Activated B cell treated with CpG ODN at 0.5 μM for 24 hours (primary cell): ENCODE measurements at regions of chr11 and their contacts with region 1.

Region 1: DNA sequence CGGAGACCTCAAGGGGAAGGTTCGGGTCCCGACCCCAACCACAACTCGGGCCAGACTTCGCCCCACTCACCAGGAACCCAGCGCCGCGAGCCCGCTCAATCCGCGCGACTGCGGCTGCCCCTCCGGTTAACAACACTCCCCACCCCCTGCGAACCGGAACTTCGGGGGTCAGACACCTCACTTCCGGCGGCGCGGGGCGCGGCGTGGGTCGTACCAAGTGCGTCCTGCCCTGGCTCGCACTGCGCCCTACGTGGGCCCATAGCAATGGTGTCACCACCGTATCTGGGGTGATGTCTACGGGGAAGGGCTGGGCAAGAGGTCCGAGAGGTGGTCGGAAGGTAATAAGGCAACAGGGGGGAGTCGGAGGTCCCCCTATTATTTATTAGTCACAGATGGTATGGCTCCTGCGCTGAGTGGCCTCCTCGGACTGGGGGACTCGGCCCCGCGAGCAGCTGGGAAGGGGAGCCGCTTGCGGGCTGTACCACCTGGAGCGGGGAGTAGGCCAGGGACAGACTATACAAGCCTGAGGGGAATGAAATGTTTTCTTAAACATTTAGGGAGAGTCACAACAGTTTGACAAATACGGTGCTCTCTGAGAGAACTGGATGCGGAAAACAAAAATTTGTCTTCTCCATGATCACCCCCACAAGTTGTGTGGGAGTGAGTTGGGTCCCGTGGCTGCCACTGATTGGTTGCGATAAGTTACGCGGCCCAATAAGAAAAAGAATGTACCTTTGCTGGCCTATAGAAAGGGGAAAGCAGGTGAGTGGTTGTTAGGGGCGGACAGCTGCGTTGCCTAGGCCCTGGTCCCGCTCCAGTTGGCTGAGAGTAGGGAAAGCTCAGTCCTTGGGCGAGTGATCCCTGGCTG is at the start of gene SYVN1:
- DNase-seq: peak; percentile 92
- ATAC-seq: peak; percentile 60
- H3K4me3 Mint-ChIP-seq: peak within 1 kb of the TSS; percentile 99
- H3K27ac Mint-ChIP-seq: peak within 1 kb of the TSS; percentile 99
- H3K4me1 Mint-ChIP-seq: peaks cover 64% of the 10 kb centered on the region
- H3K27me3 Mint-ChIP-seq: no peaks in the 10 kb centered on the region
- CTCF ChIP-seq: no peak
- total RNA-seq, gene SYVN1: 232 and 238 TPM in 2 replicates

Region 2: DNA sequence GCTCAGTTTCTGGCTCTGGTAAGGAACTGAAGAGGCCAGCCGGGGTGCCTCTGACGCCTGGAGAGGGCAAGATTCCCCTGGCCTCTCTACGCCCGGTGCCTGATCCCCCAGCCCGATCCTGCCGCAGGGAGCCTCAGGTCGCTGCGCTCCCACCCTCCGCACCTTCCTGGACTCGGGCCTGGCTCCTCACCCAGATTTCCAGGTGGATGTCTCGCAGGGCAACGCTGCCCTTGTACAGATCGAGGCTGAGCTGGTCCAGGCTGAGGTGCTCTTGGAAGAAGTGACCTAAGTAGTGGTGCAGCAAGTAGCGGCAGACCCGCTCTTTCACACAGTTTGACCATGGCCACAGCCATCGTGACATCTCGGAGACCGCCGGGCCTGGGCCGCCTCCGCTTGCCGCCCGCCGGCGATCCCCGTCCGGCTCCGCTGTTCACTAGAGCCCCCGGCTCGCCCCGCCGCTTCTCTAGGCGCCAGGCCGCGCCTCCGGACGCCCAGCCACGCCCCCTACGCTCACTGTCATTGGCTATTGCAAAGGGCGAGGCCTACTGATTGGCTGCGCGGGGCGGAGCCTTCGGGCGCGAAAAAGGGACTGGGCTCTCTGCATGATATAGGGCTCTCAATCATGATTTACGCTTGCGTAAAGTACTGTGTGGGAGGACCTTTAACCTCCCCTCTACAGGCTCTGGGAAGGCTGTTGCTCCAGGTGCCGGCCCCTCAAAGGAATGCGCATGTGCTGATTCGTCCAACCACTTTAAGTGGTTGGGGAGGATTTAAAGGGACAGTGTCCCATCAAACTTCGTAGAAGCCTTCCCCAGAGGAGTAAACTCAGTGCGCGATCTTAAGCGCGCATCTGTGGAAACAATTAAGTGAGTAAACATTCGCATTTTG is 217.6 kb before region 1 on chr11 and contains the start of gene ATG2A:
- CTCF ChIA-PET with region 1: no interaction called
- POLR2A ChIA-PET with region 1: no interaction called
- intact Hi-C with region 1: loop called (anchors 1 kb)
- DNase-seq: peak; percentile 97
- ATAC-seq: peak; percentile 98
- H3K4me3 Mint-ChIP-seq: peak within 1 kb of the TSS; percentile 88
- H3K27ac Mint-ChIP-seq: peak within 1 kb of the TSS; percentile 85
- H3K4me1 Mint-ChIP-seq: peaks cover 38% of the 10 kb centered on the region
- H3K27me3 Mint-ChIP-seq: no peaks in the 10 kb centered on the region
- CTCF ChIP-seq: no peak
- total RNA-seq, gene ATG2A: 31.2 and 35.0 TPM in 2 replicates

Region 3: GRCh38 chr11:65032216-65032615 is 102.4 kb before region 1 on chr11:
- CTCF ChIA-PET with region 1: no interaction called
- POLR2A ChIA-PET with region 1: no interaction called
- intact Hi-C with region 1: no loop called
- DNase-seq: no peak
- ATAC-seq: no peak
- H3K4me3 Mint-ChIP-seq: no peak overlapping the region
- H3K27ac Mint-ChIP-seq: no peak overlapping the region
- H3K4me1 Mint-ChIP-seq: peaks cover 16% of the 10 kb centered on the region
- H3K27me3 Mint-ChIP-seq: no peaks in the 10 kb centered on the region
- CTCF ChIP-seq: no peak

Region 4: DNA sequence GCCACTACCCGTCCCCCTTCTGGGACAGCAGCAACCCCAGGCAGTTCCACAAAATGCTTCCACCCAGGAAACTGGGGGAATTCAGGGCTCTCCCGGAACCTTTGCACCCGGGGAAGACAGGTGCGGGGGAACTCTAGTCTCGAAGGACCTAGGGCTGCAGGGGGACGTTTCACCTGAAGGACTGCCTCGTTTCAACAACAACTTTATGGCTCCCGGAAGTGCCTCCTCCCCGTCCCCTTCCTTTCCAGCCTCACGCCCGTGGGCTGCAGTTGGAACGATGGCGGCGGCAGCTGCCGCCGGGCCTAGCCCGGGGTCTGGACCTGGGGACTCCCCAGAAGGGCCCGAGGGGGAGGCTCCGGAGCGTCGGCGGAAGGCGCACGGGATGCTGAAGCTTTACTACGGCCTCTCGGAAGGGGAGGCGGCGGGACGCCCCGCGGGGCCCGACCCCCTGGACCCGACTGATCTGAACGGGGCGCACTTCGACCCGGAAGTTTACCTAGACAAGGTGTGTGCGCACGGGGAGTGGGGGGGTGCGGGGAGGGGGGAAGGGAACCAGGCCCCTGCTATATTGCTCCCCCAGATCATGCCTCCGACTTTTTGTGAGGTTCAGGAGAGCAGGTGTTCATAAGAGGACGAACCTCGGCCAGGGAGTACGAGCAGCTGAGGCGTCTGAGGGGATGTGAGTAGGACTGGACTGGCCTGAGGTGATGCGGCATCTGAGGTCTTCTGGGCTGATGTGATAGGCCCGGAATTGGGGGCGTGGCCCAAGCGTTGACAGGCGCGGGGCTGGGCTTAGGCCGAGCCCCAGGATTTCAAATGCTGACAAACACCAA is 38.4 kb before region 1 on chr11 and contains the start of gene VPS51:
- CTCF ChIA-PET with region 1: no interaction called
- POLR2A ChIA-PET with region 1: interaction called, 10 read pairs
- intact Hi-C with region 1: loop called (anchors 1 kb)
- DNase-seq: peak; percentile 74
- ATAC-seq: peak; percentile 92
- H3K4me3 Mint-ChIP-seq: peak within 1 kb of the TSS; percentile 91
- H3K27ac Mint-ChIP-seq: peak within 1 kb of the TSS; percentile 88
- H3K4me1 Mint-ChIP-seq: peaks cover 18% of the 10 kb centered on the region
- H3K27me3 Mint-ChIP-seq: no peaks in the 10 kb centered on the region
- CTCF ChIP-seq: no peak
- total RNA-seq, gene VPS51: 224 and 243 TPM in 2 replicates

Region 5: DNA sequence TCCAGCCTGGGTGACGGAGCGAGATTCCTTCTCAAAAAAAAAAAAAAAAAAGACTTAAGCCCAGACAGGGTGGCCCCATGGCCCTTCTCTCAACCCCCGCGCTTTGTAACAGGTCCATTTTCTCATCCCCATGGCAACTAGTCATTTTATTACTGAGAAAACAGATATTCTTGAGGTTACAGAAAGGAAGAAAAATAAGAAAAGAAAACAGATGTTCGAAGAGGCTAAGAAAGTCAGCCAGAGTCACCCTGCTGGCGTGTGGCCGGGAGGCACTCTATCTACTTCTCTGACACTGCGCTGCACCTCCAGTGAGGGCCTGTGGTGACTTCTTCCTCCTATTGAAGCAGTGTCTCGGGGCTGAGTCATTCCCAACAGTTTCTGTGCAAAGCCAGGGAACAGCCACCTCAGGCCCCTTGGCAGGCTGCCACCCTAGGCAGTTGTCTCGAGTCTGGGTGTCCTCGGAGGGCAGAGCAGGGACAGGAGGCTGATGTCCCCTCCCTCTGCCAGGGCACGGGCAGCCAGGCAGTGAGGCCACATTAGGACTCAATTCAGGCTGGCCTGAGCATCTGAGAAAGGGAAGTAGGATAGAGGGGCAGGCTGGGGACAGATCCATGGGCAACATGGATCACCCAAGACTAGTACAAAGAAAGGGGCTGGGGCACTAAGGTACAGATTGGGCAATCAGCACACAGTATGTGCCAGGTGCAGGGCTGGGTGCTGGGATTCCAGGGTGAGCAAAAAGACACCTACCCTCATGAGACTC is 16.1 kb after region 1 on chr11:
- CTCF ChIA-PET with region 1: no interaction called
- POLR2A ChIA-PET with region 1: interaction called, 15 read pairs
- intact Hi-C with region 1: no loop called
- DNase-seq: no peak
- ATAC-seq: peak; percentile 53
- H3K4me3 Mint-ChIP-seq: no peak overlapping the region
- H3K27ac Mint-ChIP-seq: no peak overlapping the region
- H3K4me1 Mint-ChIP-seq: peaks cover 35% of the 10 kb centered on the region
- H3K27me3 Mint-ChIP-seq: no peaks in the 10 kb centered on the region
- CTCF ChIP-seq: no peak

Region 6: GRCh38 chr11:65169164-65169641 is 34.6 kb after region 1 on chr11:
- CTCF ChIA-PET with region 1: no interaction called
- POLR2A ChIA-PET with region 1: interaction called, 27 read pairs
- intact Hi-C with region 1: no loop called
- DNase-seq: no peak
- ATAC-seq: peak; percentile 62
- H3K4me3 Mint-ChIP-seq: no peak overlapping the region
- H3K27ac Mint-ChIP-seq: peak overlapping the region; percentile 87
- H3K4me1 Mint-ChIP-seq: peaks cover 12% of the 10 kb centered on the region
- H3K27me3 Mint-ChIP-seq: no peaks in the 10 kb centered on the region
- CTCF ChIP-seq: no peak

Region 7: GRCh38 chr11:65180877-65181568 is 46.4 kb after region 1 on chr11:
- CTCF ChIA-PET with region 1: interaction called, 54 read pairs
- POLR2A ChIA-PET with region 1: interaction called, 163 read pairs
- intact Hi-C with region 1: loop called (anchors 1 kb)
- DNase-seq: peak; percentile 77
- ATAC-seq: peak; percentile 82
- H3K4me3 Mint-ChIP-seq: peak overlapping the region; percentile 92
- H3K27ac Mint-ChIP-seq: peak overlapping the region; percentile 92
- H3K4me1 Mint-ChIP-seq: peaks cover 21% of the 10 kb centered on the region
- H3K27me3 Mint-ChIP-seq: no peaks in the 10 kb centered on the region
- CTCF ChIP-seq: no peak